Psoas muscle (tissue), 8 donors: ENCODE measurements at regions of chr6 and their contacts with region 1.

Region 1: GRCh38 chr6:139240161-139241010 is 51.4 kb downstream of the TXLNB start:
- DNase-seq: no peak
- ATAC-seq: no peak
- H3K4me3 ChIP-seq: no peak overlapping the region
- H3K27ac ChIP-seq: peak overlapping the region; percentile 3
- H3K4me1 ChIP-seq: peaks cover 43% of the 10 kb centered on the region
- H3K27me3 ChIP-seq: no peaks in the 10 kb centered on the region
- CTCF ChIP-seq: no peak

Region 2: DNA sequence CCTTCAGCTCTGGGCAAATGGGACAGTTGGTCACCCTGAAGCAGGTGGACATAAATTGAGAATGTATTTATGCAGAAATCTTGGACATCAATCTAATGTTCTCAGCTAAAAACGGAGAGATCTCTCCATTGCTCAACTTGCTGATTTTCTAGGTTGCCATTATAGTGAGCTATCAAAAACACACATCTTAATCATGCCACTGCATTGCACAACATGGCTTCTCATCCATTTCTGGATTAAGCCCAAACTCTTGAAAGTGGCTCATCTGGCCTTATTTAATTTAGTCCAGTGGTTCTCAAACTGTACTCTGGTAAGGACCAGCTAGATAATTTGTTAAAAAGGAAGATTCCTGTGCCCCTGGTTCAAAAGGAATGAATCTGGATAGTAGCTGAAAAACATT is 458.9 kb after region 1 on chr6:
- intact Hi-C with region 1: loop called in 1 of 2 experiments (anchors 10 kb)
- DNase-seq: no peak
- ATAC-seq: peak in 3 of 4 donors; percentile 28 to 60 (median 37)
- H3K4me3 ChIP-seq: no peak overlapping the region
- H3K27ac ChIP-seq: no peak overlapping the region
- H3K4me1 ChIP-seq: peaks cover 4% of the 10 kb centered on the region
- H3K27me3 ChIP-seq: no peaks in the 10 kb centered on the region
- CTCF ChIP-seq: no peak